ENCODE measurements at regions of chr11 and their contacts with region 1.

Region 1: GRCh38 chr11:62542750-62543567 is 3.6 kb downstream of the AHNAK start:
- DNase-seq: peak in 7 of 10 donors; percentile 38 to 82 (median 60)
- H3K4me3 ChIP-seq: peak overlapping the region in 51 of 59 donors; percentile 1 to 79 (median 65)
- H3K27ac ChIP-seq: peak overlapping the region in 54 of 59 donors; percentile 2 to 92 (median 69)
- H3K27me3 ChIP-seq: peaks cover 0 to 39% (median 27%) of the 10 kb centered on the region in 45 donors
- CTCF ChIP-seq: peak; percentile 75 to 100 (median 97)

Region 2: GRCh38 chr11:62421996-62422395 is 121.0 kb before region 1 on chr11:
- intact Hi-C with region 1: loop called (anchors 5 kb)
- DNase-seq: no peak
- H3K4me3 ChIP-seq: no peak overlapping the region
- H3K27ac ChIP-seq: no peak overlapping the region
- H3K27me3 ChIP-seq: no peaks in the 10 kb centered on the region
- CTCF ChIP-seq: no peak

Region 3: DNA sequence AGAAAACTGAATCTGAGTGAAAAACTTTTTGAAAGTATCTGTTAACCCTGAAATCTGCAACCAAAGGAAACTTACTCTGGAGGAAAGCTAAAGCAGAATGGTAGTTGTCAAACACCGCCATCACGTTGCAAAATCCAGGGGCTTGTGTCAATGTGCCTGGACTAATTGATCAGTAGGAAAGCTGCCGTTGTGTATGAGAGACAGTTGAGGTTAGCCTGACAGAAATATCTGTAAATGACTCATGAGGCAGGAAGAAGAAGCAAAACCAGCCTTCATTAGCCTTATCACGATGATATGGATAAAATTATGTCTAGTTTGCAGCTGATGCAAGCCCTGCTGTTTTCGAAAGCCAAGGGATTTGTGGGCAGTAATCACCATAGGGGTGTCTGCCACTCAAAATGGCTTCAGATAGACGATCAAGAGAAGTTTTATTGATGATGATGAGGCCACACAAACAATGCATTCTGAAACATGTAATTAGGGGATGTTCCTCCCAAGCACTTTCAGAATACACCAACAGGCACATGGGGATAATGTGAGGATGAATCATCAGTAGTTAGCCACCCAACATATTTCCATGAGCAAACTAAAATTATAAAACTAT is 115.2 kb before region 1 on chr11:
- intact Hi-C with region 1: loop called (anchors 5 kb)
- DNase-seq: no peak
- H3K4me3 ChIP-seq: no peak overlapping the region
- H3K27ac ChIP-seq: peak overlapping the region in 1 of 59 donors; percentile 18
- H3K27me3 ChIP-seq: peaks cover 0 to 6% (median 0%) of the 10 kb centered on the region in 45 donors
- CTCF ChIP-seq: no peak

Region 4: GRCh38 chr11:62601394-62602140 is 58.6 kb after region 1 on chr11 and contains the start of gene MTA2:
- intact Hi-C with region 1: no loop called
- DNase-seq: peak; percentile 89 to 98 (median 95)
- H3K4me3 ChIP-seq: peak within 1 kb of the TSS; percentile 54 to 100 (median 98)
- H3K27ac ChIP-seq: peak within 1 kb of the TSS; percentile 69 to 99 (median 97)
- H3K27me3 ChIP-seq: no peaks in the 10 kb centered on the region
- CTCF ChIP-seq: peak in 10 of 56 donors; percentile 1 to 30 (median 14)
- total RNA-seq, gene MTA2: 39.4 to 85.0 (median 58.9) TPM

Measured in dorsolateral prefrontal cortex (tissue), 120 donors.